K562 (cell line): ENCODE measurements at regions of chr19 and their contacts with region 1.

Region 1: DNA sequence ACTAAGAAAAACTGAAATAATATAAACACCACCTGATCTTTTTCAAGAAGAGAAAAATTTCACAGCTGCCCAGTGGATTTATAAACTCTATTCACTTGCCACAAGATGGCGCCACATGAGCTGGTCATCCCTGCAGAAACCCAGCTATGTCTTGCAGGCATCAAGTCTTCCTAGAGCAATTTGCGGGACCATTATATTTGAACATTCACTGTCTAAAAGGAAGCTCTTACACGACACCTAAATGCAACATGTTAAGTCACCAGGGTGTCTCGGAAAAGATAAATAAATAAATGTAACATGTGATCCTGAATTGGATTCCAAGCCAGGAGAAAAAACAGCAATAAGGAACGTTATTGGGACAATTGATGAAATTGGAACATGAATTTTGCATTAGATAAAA is 20.3 kb upstream of the AKT2 start:
- DNase-seq: peak; percentile 79 to 92 (median 84)
- ATAC-seq: peak; percentile 93
- H3K4me3 ChIP-seq: no peak overlapping the region
- H3K27ac ChIP-seq: no peak overlapping the region
- H3K4me1 ChIP-seq: no peaks in the 10 kb centered on the region; a peak in 2 of 5 replicates
- H3K27me3 ChIP-seq: no peaks in the 10 kb centered on the region
- CTCF ChIP-seq: peak; percentile 77 to 94 (median 80)
- EP300 ChIP-seq: no peak
- POLR2A ChIP-seq: no peak
- RAD21 ChIP-seq: peak; percentile 86 to 89

Region 2: DNA sequence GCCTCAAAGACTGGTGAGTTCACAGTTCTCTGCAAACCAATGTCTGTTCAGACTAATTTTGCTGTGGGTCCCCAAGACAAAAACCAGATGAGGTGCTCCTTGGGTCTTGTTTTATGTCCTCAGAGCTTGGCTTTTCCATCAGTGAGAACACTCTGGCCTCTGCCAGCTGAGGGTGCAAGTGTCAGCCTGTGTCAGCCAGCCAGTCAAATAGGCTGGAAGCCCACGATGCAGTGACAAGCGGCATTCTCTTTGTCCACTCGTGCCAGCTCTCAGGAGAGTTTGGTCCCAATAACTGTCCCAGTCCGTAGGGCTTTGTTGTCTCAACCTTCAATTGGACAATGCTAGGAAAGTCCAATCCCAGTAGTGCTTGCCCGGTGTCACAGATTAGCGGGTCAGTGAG is 10.8 kb before region 1 on chr19:
- CTCF ChIA-PET with region 1: no interaction called
- POLR2A ChIA-PET with region 1: interaction called, 12 read pairs
- in situ Hi-C with region 1: no loop called
- intact Hi-C with region 1: no loop called
- DNase-seq: no peak
- ATAC-seq: no peak
- H3K4me3 ChIP-seq: no peak overlapping the region
- H3K27ac ChIP-seq: no peak overlapping the region
- H3K4me1 ChIP-seq: no peaks in the 10 kb centered on the region; a peak in 1 of 5 replicates
- H3K27me3 ChIP-seq: no peaks in the 10 kb centered on the region
- CTCF ChIP-seq: no peak
- EP300 ChIP-seq: no peak
- POLR2A ChIP-seq: no peak
- RAD21 ChIP-seq: no peak

Region 3: GRCh38 chr19:40523322-40524047 is 218.1 kb after region 1 on chr19:
- CTCF ChIA-PET with region 1: interaction called, 3 read pairs
- POLR2A ChIA-PET with region 1: no interaction called
- in situ Hi-C with region 1: no loop called
- intact Hi-C with region 1: loop called (anchors 2 kb)
- DNase-seq: peak; percentile 70 to 88 (median 77)
- ATAC-seq: peak; percentile 92
- H3K4me3 ChIP-seq: 0 out of 2 replicates have a peak overlapping the region, but pooled peaks have one; percentile 5
- H3K27ac ChIP-seq: peak overlapping the region; percentile 54
- H3K4me1 ChIP-seq: peaks cover 41 to 62% of the 10 kb centered on the region in 2 experiments
- H3K27me3 ChIP-seq: no peaks in the 10 kb centered on the region
- CTCF ChIP-seq: peak; percentile 90 to 95 (median 92)
- EP300 ChIP-seq: no peak
- POLR2A ChIP-seq: no peak
- RAD21 ChIP-seq: peak; percentile 41 to 69

Region 4: DNA sequence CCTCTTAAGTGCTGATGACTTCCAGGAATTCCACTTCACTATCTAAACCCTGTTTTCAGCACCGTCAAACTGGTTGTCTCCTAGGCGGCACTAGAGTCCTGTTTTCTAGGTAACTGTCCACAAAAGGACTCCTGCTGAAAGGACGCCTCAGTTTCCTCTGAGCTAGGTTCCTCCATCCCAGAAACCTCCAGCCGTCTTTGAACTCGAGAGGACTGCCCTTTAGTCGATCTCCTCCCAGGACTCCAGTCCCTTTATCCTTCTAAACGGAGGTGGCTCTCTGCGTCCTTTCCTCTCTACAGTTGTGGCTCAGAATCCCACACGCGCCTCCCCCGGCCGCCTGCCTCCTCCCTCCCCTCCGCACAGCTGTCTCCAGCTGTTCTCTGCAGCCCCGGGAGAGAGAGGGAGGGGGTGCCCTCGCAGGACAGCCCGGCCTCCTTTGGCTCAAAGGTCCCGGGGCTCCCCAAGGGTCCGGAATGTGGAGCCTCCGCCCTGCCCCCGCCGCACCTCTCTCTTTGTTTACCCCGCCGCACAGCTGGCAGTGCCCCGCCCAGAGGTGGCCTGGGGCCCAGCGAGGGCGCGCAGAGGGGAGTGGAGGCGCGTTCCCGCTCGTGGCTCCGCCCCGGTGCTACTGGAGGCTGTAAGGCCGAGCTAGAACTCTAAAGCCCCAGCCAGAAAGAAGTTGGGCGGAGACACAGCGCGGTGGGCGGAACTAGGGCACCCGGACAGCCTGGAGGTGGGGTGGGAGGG is 298.2 kb after region 1 on chr19:
- CTCF ChIA-PET with region 1: interaction called, 5 read pairs
- POLR2A ChIA-PET with region 1: interaction called, 3 read pairs
- in situ Hi-C with region 1: no loop called
- intact Hi-C with region 1: loop called (anchors 5 kb)
- DNase-seq: peak; percentile 76 to 99 (median 88)
- ATAC-seq: peak; percentile 83
- H3K4me3 ChIP-seq: peak overlapping the region; percentile 61
- H3K27ac ChIP-seq: peak overlapping the region; percentile 93
- H3K4me1 ChIP-seq: peaks cover 60 to 95% of the 10 kb centered on the region in 2 experiments
- H3K27me3 ChIP-seq: no peaks in the 10 kb centered on the region
- CTCF ChIP-seq: peak in 2 of 3 experiments; percentile 36 to 46; a peak in 3 of 6 replicates
- EP300 ChIP-seq: no peak
- POLR2A ChIP-seq: no peak
- RAD21 ChIP-seq: peak in 1 of 2 experiments; percentile 47; a peak in 2 of 4 replicates

Region 5: DNA sequence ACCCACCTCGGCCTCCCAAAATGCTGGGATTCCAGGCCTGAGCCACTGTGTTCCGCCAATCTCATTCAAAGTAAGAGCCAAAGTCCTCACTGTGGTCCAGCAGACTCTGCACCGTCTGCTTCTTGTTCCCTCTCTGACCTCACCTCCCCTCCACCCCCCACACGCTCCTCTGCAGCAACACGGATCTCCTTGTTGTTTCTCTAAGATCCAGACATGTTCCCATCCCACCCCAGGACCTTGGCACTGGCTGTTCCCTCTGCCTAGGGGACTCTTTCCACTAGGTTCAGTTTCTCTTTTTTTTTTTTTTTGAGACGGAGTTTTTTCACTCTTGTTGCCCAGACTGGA is 334.2 kb after region 1 on chr19:
- CTCF ChIA-PET with region 1: interaction called, 9 read pairs
- POLR2A ChIA-PET with region 1: no interaction called
- in situ Hi-C with region 1: loop called (anchors 5 kb)
- intact Hi-C with region 1: no loop called
- DNase-seq: peak in 1 of 4 experiments; percentile 18
- ATAC-seq: no peak
- H3K4me3 ChIP-seq: no peak overlapping the region
- H3K27ac ChIP-seq: no peak overlapping the region
- H3K4me1 ChIP-seq: peaks cover 4 to 22% of the 10 kb centered on the region in 2 experiments; a peak in 4 of 5 replicates
- H3K27me3 ChIP-seq: no peaks in the 10 kb centered on the region
- CTCF ChIP-seq: no peak
- EP300 ChIP-seq: no peak
- POLR2A ChIP-seq: no peak
- RAD21 ChIP-seq: no peak